ENCODE measurements at regions of chr3 and their contacts with region 1.

Region 1: DNA sequence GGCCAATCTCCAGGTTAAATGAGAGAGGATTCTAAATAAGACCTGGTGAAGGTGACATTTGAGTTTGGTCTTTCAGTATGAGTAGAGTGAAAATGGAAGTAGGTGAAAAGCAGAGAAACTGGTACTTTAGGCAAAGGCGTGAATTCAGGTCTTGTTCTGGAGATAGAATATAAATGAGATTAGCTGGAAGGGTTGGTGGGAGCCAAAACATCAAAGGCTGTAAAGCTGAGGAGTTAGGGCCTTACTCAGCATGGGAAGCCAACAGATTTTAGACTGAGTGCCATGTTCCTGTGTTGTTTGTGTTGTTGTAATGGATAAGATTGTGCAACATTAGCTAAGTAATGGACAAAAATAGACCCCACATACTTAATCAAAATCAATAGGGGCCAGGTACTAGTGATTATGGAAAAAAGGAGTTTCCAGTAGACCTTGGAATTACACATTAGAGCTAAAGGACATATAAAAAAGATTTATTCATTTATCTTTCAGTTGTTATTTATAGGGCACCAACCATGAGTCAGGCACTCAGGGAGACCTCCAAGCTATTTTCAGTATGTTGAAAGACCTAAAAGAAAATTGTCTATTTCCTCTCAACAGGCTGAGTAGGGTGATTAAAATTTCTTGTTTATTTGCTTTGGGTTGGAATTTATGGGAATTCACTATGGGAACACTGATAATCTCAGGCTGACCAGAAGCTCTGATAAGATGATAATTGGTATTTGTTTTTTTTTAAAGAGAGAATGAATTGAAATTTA is 20.8 kb downstream of the ARL14 start:
- DNase-seq: no peak
- ATAC-seq: no peak
- H3K4me3 ChIP-seq: no peak overlapping the region
- H3K4me3 Mint-ChIP-seq: no peak overlapping the region
- H3K27ac ChIP-seq: no peak overlapping the region
- H3K27ac Mint-ChIP-seq: no peak overlapping the region
- H3K4me1 ChIP-seq: no peaks in the 10 kb centered on the region
- H3K4me1 Mint-ChIP-seq: peaks cover 0 to 3% (median under 1%) of the 10 kb centered on the region in 7 donors
- H3K27me3 ChIP-seq: no peaks in the 10 kb centered on the region
- H3K27me3 Mint-ChIP-seq: peaks cover 0 to 22% (median 8%) of the 10 kb centered on the region in 5 donors

Region 2: DNA sequence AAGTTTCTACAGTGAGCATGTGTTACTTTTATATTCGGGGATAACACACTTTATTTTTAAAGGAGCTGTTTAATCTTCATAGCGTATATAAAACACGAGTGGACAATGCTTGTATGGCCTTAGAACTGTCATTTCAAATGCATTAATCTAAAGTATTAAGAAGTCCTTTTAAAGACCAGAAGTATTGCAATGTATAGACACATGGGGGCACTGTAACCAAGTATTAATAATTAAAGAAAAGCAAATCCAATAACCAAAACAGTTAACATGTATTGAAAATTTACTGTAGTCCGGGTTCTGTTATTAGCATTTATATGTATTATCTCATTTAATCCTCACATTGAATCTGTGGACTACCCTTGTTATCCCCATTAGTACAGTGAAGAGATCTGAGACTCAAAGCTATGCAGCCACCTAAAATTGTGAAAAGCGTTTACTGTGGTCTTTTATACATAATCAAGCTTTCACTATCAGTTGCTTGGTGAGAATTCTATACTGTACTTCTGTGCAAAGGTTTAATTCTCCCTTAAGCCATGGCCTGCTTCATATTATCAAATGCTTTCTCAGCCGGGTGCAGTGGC is 10.8 kb before region 1 on chr3:
- CTCF ChIA-PET with region 1: no interaction called
- POLR2A ChIA-PET with region 1: no interaction called
- intact Hi-C with region 1: loop called in 1 of 2 experiments (anchors 1 kb)
- DNase-seq: peak in 1 of 9 donors; percentile 6
- ATAC-seq: peak; percentile 40
- H3K4me3 ChIP-seq: no peak overlapping the region
- H3K4me3 Mint-ChIP-seq: no peak overlapping the region
- H3K27ac ChIP-seq: no peak overlapping the region
- H3K27ac Mint-ChIP-seq: no peak overlapping the region
- H3K4me1 ChIP-seq: no peaks in the 10 kb centered on the region
- H3K4me1 Mint-ChIP-seq: no peaks in the 10 kb centered on the region
- H3K27me3 ChIP-seq: no peaks in the 10 kb centered on the region
- H3K27me3 Mint-ChIP-seq: peaks cover 0 to 7% (median 0%) of the 10 kb centered on the region in 5 donors

Measured in naive thymus-derived CD4-positive, alpha-beta T cell (primary cell).